ENCODE measurements at regions of chr19 and their contacts with region 1.

Region 1: DNA sequence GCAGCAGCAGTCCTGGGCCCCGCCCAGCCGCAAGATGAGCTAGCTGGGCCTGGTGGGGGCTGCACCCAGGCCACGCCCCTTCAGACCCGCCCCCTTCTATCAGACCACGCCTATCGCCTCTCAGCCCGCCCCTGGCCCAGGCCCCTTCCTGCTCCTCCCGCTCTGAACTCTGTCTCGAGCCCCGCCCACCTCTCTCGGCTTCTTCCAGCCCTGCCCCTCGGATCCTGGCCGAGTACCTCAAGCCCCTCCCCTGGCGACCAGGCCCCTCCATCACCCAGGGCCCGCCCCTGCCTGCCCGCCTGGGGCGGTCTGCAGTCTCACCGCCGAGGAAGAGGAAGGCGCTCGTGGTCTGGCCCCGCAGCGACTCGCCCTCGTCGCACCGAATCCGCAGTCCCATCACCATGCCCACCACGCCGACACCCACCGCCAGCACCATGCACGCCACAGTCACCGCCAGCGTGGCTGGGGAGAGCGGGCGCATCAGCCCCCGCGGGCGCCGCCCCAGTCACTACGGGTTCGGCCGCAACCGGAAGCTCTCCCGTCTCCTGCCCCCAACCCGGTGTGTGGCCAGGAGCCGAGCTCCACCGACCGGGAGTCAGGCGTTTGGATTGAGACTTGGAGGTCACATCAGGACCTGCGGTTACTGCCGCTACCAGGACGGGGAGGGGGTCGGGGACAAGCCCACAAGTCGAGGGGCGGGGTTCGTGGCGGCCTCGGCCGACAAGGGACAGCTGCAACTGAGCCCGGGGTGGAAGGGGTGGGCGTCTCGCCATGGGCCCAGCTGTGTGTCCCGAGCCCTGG is 1.0 kb downstream of the CLDND2 start:
- DNase-seq: peak; percentile 99 to 100 (median 100)
- H3K4me3 ChIP-seq: peak overlapping the region; percentile 95
- H3K27ac ChIP-seq: peak overlapping the region; percentile 74 to 80
- H3K4me1 ChIP-seq: peaks cover 7% of the 10 kb centered on the region
- H3K27me3 ChIP-seq: no peaks in the 10 kb centered on the region
- CTCF ChIP-seq: no peak
- EP300 ChIP-seq: no peak
- POLR2A ChIP-seq: no peak

Region 2: GRCh38 chr19:49929611-49930482 is 1437.9 kb before region 1 on chr19:
- intact Hi-C with region 1: no loop called
- DNase-seq: peak; percentile 93 to 97 (median 96)
- H3K4me3 ChIP-seq: peak overlapping the region; percentile 94
- H3K27ac ChIP-seq: peak overlapping the region; percentile 82
- H3K4me1 ChIP-seq: peaks cover 10% of the 10 kb centered on the region
- H3K27me3 ChIP-seq: no peaks in the 10 kb centered on the region
- CTCF ChIP-seq: peak in 1 of 3 donors; percentile 47
- EP300 ChIP-seq: no peak
- POLR2A ChIP-seq: no peak

Region 3: GRCh38 chr19:51305479-51305878 is 62.3 kb before region 1 on chr19:
- intact Hi-C with region 1: no loop called
- DNase-seq: no peak
- H3K4me3 ChIP-seq: no peak overlapping the region
- H3K27ac ChIP-seq: no peak overlapping the region
- H3K4me1 ChIP-seq: no peaks in the 10 kb centered on the region
- H3K27me3 ChIP-seq: no peaks in the 10 kb centered on the region
- CTCF ChIP-seq: no peak
- EP300 ChIP-seq: no peak
- POLR2A ChIP-seq: no peak

Region 4: DNA sequence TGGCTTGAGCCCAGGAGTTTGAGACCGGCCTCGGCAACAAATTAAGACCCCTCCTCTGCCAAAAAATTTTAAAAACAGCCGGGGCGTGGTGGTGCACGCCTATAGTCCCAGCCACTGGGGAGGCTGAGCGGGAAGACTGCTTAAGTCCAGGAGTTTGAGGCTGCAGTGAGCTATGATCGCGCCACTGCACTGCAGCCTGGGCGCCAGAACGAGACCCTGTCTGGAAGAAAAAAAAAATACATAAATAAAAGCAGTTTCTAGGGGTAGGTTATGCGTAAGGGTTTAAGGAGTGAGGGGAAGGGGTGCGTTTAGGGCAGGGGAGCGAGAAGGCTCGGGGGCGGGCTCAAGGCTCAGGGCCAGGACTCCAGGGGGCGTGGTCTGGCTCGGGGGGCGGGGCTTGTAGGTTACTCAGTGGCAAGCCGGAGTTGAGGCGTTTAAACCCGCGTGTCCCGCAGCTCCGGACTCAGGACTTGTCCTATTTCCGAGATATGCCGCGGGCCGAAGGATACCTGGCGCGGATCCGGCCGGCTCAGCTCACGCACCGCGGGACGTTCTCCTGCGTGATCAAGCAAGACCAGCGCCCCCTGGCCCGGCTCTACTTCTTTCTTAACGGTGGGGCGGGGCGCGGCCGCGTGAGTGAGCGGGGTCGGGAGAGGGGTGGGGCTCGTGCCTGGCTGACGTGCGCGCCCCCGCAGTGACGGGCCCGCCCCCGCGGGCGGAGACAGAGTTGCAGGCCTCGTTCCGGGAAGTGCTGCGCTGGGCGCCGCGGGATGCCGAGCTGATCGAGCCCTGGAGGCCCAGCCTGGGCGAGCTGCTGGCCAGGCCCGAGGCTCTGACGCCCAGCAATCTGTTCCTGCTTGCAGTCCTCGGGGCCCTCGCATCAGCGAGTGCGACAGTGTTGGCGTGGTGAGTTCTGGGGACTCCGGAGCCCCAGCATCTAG is 336.1 kb after region 1 on chr19:
- intact Hi-C with region 1: loop called in 1 of 4 experiments (anchors 10 kb)
- DNase-seq: peak; percentile 98 to 99 (median 98)
- H3K4me3 ChIP-seq: peak overlapping the region; percentile 75
- H3K27ac ChIP-seq: peak overlapping the region; percentile 94 to 96
- H3K4me1 ChIP-seq: peaks cover 10% of the 10 kb centered on the region
- H3K27me3 ChIP-seq: no peaks in the 10 kb centered on the region
- CTCF ChIP-seq: peak; percentile 39 to 76 (median 72)
- EP300 ChIP-seq: peak; percentile 93
- POLR2A ChIP-seq: peak; percentile 87

Measured in ovary (tissue), 10 donors.